ENCODE measurements at regions of chr5 and their contacts with region 1.

Region 1: GRCh38 chr5:159987031-159987674 is 21.8 kb upstream of the TTC1 start:
- DNase-seq: peak; percentile 65
- H3K4me3 ChIP-seq: peak overlapping the region; percentile 40
- H3K27ac ChIP-seq: no peak overlapping the region
- H3K4me1 ChIP-seq: no peaks in the 10 kb centered on the region
- CTCF ChIP-seq: peak; percentile 75

Region 2: DNA sequence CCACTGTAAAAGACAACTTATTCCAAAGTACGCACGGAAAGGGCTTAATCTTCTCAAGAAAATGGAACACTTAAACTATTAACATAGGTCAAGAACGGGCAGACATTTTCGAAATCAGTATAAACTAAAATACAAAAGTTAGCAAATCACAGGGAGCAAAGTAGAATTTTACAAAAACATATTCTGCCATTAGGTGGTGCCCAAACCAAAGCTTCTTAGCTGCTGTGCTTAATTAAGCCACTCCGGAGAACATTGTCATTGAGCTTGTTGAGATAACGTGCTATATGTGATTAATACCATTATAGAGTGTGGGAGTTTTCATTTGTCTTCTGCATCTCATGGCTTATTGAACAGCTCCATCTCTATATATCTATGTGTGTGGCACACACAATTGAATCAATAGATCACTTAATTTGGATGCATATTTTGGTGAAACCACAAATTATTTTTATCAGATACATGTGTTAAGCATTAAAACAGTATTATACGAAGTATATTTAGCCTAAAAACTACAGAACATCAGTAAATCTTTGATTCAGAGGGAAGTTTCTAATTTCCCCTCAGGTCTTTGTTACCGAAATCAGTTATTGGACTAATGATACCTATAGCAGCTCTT is 700.6 kb before region 1 on chr5:
- CTCF ChIA-PET with region 1: no interaction called
- POLR2A ChIA-PET with region 1: no interaction called
- intact Hi-C with region 1: loop called (anchors 5 kb)
- DNase-seq: peak; percentile 52
- H3K4me3 ChIP-seq: no peak overlapping the region
- H3K27ac ChIP-seq: no peak overlapping the region
- H3K4me1 ChIP-seq: no peaks in the 10 kb centered on the region
- CTCF ChIP-seq: peak; percentile 79

Region 3: DNA sequence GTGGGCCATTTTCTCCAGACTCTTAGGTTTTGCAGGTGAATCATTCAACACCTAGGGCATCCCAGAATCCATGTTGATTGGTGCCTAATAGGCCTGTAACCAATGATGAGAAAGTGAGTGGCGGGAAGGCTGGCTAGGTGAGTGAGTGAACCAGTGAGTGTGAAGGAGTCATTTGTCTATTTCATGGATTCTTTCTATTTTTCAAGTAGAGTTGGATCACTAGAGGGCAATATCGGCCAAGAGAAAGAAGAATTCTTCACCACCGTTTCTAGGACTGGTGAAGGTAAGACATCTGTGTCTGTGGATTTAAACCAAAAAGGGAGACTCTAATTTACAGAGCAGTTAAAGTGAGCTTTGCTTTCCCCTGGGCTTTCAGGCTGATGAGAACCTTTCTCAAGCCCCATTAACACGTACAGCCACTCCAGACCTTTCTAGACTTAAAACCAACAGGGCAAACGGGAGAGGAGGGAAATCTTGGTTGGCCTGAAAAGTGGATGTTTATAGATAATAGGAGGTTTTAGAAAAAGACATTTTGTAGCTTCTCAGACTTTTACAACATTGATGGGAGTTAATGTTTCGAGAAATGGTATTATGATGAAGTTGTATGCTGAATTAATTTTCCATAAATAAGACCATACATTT is 542.6 kb before region 1 on chr5:
- CTCF ChIA-PET with region 1: interaction called, 3 read pairs
- POLR2A ChIA-PET with region 1: no interaction called
- intact Hi-C with region 1: loop called (anchors 5 kb)
- DNase-seq: peak; percentile 31
- H3K4me3 ChIP-seq: no peak overlapping the region
- H3K27ac ChIP-seq: no peak overlapping the region
- H3K4me1 ChIP-seq: no peaks in the 10 kb centered on the region
- CTCF ChIP-seq: peak; percentile 67

Measured in OCI-LY7 (cell line).